Ascending aorta (tissue), 2 donors: ENCODE measurements at regions of chr11 and their contacts with region 1.

Region 1: DNA sequence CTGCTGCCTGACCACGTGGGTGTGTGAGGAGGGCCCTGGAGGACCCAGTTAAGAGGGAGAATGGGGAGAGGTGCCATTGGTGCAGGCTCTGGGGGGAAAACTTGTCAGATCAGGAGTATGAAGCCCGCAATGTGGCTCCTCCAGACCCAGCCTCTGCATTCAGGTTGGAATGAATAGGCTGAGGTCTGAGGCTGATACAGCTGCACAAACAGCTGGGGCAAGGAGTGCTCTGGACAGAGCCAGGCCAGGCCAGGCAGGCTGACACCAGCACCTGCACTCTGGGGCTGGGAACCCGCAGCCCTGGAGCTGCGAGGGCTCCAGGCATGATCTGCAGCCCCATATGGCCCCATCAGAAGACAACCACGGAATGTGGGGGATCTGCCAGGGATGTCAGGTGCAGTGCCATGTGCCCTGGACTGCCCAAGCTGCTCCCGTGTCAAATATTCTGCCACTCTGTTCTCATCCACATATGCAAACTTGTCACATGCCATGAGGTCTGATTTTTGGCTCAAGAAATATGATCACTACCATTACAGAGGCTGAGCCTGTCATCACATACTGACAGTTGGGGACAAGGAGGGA is 27.2 kb upstream of the KCNJ11 start:
- DNase-seq: no peak
- H3K4me3 ChIP-seq: no peak overlapping the region
- H3K27ac ChIP-seq: no peak overlapping the region
- H3K4me1 ChIP-seq: no peaks in the 10 kb centered on the region
- H3K27me3 ChIP-seq: no peaks in the 10 kb centered on the region
- CTCF ChIP-seq: no peak

Region 2: DNA sequence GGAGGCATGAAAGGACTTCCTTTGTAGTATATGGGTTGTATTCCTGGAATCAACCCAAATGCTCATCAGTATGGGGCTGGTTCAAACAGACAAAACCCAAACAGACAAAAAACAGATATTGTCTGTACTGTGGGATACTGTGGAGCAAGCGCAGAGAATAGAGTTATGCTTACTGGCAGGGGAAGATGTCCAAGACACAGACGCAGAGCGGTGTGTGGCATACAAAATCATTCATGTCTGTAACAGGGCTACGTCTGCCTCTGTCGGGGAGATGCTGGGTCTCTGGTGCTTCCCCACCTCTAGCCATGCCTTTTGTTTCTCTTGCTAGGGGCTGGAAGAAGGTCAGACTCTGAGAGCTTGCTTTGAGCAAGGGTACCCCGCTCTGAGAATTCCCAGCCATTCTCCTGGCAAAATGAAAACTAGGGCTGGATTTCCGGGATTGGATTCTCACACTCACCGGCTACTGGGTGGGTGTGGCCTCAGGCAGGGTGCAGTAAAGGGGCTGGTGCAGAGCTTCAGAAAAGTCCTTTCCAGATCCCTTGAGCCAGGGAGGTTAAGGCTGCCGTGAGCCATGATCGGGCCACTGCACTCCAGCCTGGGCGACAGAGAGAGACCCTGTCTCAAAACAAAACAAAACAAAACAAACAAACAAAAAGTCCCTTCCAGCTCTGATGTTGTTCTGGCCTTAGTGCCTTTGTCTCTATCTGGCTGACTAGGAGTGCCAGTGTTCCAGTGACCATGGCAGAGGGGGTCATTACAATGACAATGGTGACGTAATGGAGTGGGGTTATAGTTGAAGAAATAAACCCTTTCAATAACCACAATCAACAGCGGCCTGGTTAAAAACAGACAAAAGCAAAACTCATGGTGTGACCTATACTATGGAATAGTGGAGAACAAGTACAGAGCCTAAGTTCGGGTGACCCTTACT is 63.9 kb after region 1 on chr11:
- intact Hi-C with region 1: loop called (anchors 5 kb)
- DNase-seq: no peak
- H3K4me3 ChIP-seq: no peak overlapping the region
- H3K27ac ChIP-seq: no peak overlapping the region
- H3K4me1 ChIP-seq: no peaks in the 10 kb centered on the region
- H3K27me3 ChIP-seq: no peaks in the 10 kb centered on the region
- CTCF ChIP-seq: no peak

Region 3: GRCh38 chr11:17658211-17658610 is 242.6 kb after region 1 on chr11:
- intact Hi-C with region 1: no loop called
- DNase-seq: no peak
- H3K4me3 ChIP-seq: no peak overlapping the region
- H3K27ac ChIP-seq: no peak overlapping the region
- H3K4me1 ChIP-seq: no peaks in the 10 kb centered on the region
- H3K27me3 ChIP-seq: no peaks in the 10 kb centered on the region
- CTCF ChIP-seq: no peak